ENCODE measurements at regions of chr12 and their contacts with region 1.

Region 1: DNA sequence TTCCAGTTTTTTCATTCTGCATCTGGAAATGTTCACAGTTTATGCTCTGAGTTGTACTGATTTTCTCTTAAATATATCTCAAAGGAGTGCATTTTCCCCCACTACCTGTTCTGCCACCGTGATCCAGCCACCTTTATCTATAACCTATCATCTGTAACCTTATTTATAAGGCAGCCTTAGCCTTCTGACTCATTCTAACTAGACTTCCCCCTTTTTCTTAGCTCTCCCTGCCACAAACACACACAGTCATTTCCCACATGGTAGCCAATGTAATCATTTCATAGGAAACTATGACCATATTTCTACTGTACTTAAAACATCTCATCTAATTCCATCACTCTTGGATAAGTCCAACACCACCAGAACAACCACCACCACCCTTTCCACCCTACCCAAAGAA is 10.8 kb upstream of the GYS2 start:
- DNase-seq: no peak
- ATAC-seq: no peak
- H3K4me3 ChIP-seq: no peak overlapping the region
- H3K27ac ChIP-seq: peak overlapping the region in 1 of 12 donors; percentile 56
- H3K4me1 ChIP-seq: peaks cover 0 to 26% (median 8%) of the 10 kb centered on the region in 12 donors
- H3K27me3 ChIP-seq: no peaks in the 10 kb centered on the region
- CTCF ChIP-seq: no peak
- POLR2A ChIP-seq: no peak

Region 2: GRCh38 chr12:21666722-21667121 is 51.3 kb after region 1 on chr12:
- intact Hi-C with region 1: loop called in 1 of 10 experiments (anchors 2 kb)
- DNase-seq: no peak
- ATAC-seq: no peak
- H3K4me3 ChIP-seq: no peak overlapping the region
- H3K27ac ChIP-seq: no peak overlapping the region
- H3K4me1 ChIP-seq: no peaks in the 10 kb centered on the region
- H3K27me3 ChIP-seq: no peaks in the 10 kb centered on the region
- CTCF ChIP-seq: no peak
- POLR2A ChIP-seq: no peak

Region 3: DNA sequence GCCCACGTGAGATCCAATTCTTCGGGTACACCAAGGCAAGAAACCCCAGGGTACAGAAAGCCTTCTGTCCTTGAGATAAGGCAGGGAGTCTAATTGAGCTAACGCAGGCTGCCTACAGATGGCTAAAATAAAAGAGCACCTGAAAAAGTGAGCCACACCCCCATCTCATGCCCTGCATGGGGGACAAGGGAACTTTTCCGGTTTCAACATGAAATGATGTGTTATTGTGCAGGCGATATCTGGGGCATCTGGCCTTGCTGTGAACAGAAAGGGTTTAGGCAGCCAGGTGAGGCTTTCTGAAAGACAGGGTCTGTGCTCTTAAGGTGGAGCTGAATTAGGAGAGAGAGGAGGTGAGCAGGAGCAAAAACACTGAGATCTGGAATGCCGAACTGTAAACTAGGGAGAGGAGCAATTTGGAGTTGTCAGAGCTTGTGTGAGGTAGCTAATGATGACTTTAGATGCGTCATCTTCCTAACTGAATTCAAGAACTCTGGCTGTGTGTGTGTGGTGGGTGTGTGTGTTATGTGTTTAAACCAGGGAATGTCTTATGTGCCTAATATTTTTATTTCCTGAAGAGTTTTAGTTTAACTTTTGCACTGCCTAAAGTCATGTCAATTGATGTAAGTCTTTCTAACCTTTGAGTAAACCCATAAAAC is 62.3 kb after region 1 on chr12:
- intact Hi-C with region 1: no loop called
- DNase-seq: no peak
- ATAC-seq: no peak
- H3K4me3 ChIP-seq: no peak overlapping the region
- H3K27ac ChIP-seq: no peak overlapping the region
- H3K4me1 ChIP-seq: peaks cover 0 to 11% (median 0%) of the 10 kb centered on the region in 12 donors
- H3K27me3 ChIP-seq: no peaks in the 10 kb centered on the region
- CTCF ChIP-seq: no peak
- POLR2A ChIP-seq: no peak

Region 4: GRCh38 chr12:21843795-21844194 is 228.4 kb after region 1 on chr12:
- intact Hi-C with region 1: no loop called
- DNase-seq: no peak
- ATAC-seq: no peak
- H3K4me3 ChIP-seq: no peak overlapping the region
- H3K27ac ChIP-seq: no peak overlapping the region
- H3K4me1 ChIP-seq: no peaks in the 10 kb centered on the region
- H3K27me3 ChIP-seq: no peaks in the 10 kb centered on the region
- CTCF ChIP-seq: no peak
- POLR2A ChIP-seq: no peak

Measured in heart left ventricle (tissue), 16 donors.